ENCODE measurements at regions of chr4 and their contacts with region 1.

Region 1: GRCh38 chr4:175646802-175647201 is 165.3 kb downstream of the GPM6A start:
- DNase-seq: no peak
- ATAC-seq: no peak
- H3K4me3 ChIP-seq: no peak overlapping the region
- H3K27ac ChIP-seq: no peak overlapping the region
- H3K4me1 ChIP-seq: no peaks in the 10 kb centered on the region
- H3K27me3 ChIP-seq: no peaks in the 10 kb centered on the region
- CTCF ChIP-seq: no peak
- EP300 ChIP-seq: no peak
- POLR2A ChIP-seq: no peak
- RAD21 ChIP-seq: no peak

Region 2: GRCh38 chr4:174828845-174829701 is 817.7 kb before region 1 on chr4 and contains the start of gene GLRA3:
- CTCF ChIA-PET with region 1: no interaction called
- POLR2A ChIA-PET with region 1: no interaction called
- in situ Hi-C with region 1: loop called (anchors 25 kb)
- intact Hi-C with region 1: no loop called
- DNase-seq: peak; percentile 81 to 88 (median 84)
- ATAC-seq: peak; percentile 99
- H3K4me3 ChIP-seq: peak within 1 kb of the TSS; percentile 36
- H3K27ac ChIP-seq: peak within 1 kb of the TSS; percentile 49; the same call in 2 of the 3 replicates
- H3K4me1 ChIP-seq: peaks cover 0 to 4% of the 10 kb centered on the region in 2 experiments; a peak in 2 of 5 replicates
- H3K27me3 ChIP-seq: no peaks in the 10 kb centered on the region
- CTCF ChIP-seq: no peak
- EP300 ChIP-seq: no peak
- POLR2A ChIP-seq: no peak
- RAD21 ChIP-seq: no peak
- polyA plus RNA-seq, gene GLRA3: 0.08 to 0.10 TPM

Region 3: GRCh38 chr4:175536852-175537453 is 109.8 kb before region 1 on chr4:
- CTCF ChIA-PET with region 1: no interaction called
- POLR2A ChIA-PET with region 1: no interaction called
- in situ Hi-C with region 1: no loop called
- intact Hi-C with region 1: no loop called
- DNase-seq: peak; percentile 10 to 30 (median 20)
- ATAC-seq: no peak
- H3K4me3 ChIP-seq: no peak overlapping the region
- H3K27ac ChIP-seq: no peak overlapping the region
- H3K4me1 ChIP-seq: no peaks in the 10 kb centered on the region
- H3K27me3 ChIP-seq: no peaks in the 10 kb centered on the region
- CTCF ChIP-seq: peak in 1 of 3 experiments; percentile 41; a peak in 2 of 6 replicates
- EP300 ChIP-seq: no peak
- POLR2A ChIP-seq: no peak
- RAD21 ChIP-seq: peak; percentile 46 to 50

Region 4: DNA sequence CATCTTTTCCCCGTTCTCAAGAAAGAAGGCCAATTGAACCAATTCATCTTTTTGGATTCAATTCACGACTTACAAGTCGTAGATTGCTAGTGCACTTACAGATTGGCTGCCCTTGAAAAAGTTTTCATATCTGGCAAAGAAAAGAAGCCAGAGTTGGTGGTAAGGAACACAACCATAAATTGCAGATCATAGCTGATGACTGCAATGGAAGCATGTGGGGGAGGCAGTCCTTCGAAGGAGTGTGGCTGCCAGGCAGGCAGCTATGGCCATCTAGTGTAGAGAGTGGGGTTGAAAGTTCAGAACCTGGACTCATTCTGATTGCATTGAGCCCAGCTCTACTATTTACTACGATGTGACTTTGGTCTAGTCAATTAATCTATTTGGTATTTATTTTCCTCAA is 160.7 kb after region 1 on chr4:
- CTCF ChIA-PET with region 1: no interaction called
- POLR2A ChIA-PET with region 1: no interaction called
- in situ Hi-C with region 1: no loop called
- intact Hi-C with region 1: no loop called
- DNase-seq: no peak
- ATAC-seq: no peak
- H3K4me3 ChIP-seq: no peak overlapping the region
- H3K27ac ChIP-seq: no peak overlapping the region
- H3K4me1 ChIP-seq: no peaks in the 10 kb centered on the region
- H3K27me3 ChIP-seq: no peaks in the 10 kb centered on the region
- CTCF ChIP-seq: no peak
- EP300 ChIP-seq: no peak
- POLR2A ChIP-seq: no peak
- RAD21 ChIP-seq: no peak

Region 5: DNA sequence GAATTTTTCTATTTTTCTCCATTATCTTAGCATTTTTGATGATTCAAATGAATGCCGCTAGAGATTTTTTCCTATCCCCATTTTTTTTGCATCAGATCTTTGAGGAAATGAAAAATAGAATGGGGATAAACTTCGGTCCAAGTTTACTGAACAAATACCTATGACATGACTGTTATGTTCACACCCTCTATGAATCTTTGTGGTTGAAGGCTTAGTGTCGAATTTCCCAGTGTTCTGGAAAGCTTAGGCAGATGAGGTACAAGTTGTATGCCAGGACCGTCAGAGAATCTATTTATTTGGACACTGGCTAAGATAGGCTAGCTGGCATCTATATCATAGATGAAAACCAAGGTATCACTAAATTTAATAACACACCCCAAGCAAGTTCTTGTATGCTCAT is 796.3 kb after region 1 on chr4:
- CTCF ChIA-PET with region 1: no interaction called
- POLR2A ChIA-PET with region 1: no interaction called
- in situ Hi-C with region 1: no loop called
- intact Hi-C with region 1: no loop called
- DNase-seq: no peak
- ATAC-seq: no peak
- H3K4me3 ChIP-seq: no peak overlapping the region
- H3K27ac ChIP-seq: no peak overlapping the region
- H3K4me1 ChIP-seq: no peaks in the 10 kb centered on the region
- H3K27me3 ChIP-seq: no peaks in the 10 kb centered on the region
- CTCF ChIP-seq: no peak
- EP300 ChIP-seq: no peak
- POLR2A ChIP-seq: no peak
- RAD21 ChIP-seq: no peak